ENCODE measurements at regions of chr17 and their contacts with region 1.

Region 1: GRCh38 chr17:81238817-81239600 is at the starts of genes NDUFAF8 and TEPSIN:
- DNase-seq: peak; percentile 97
- ATAC-seq: peak; percentile 99
- H3K4me3 Mint-ChIP-seq: peak within 1 kb of the TSS; percentile 93
- H3K27ac Mint-ChIP-seq: peak within 1 kb of the TSS; percentile 96
- H3K4me1 Mint-ChIP-seq: peaks cover 25% of the 10 kb centered on the region
- H3K27me3 Mint-ChIP-seq: no peaks in the 10 kb centered on the region
- total RNA-seq, gene NDUFAF8: 31.0 to 57.9 TPM
- total RNA-seq, gene TEPSIN: 17.8 to 20.3 TPM

Region 2: DNA sequence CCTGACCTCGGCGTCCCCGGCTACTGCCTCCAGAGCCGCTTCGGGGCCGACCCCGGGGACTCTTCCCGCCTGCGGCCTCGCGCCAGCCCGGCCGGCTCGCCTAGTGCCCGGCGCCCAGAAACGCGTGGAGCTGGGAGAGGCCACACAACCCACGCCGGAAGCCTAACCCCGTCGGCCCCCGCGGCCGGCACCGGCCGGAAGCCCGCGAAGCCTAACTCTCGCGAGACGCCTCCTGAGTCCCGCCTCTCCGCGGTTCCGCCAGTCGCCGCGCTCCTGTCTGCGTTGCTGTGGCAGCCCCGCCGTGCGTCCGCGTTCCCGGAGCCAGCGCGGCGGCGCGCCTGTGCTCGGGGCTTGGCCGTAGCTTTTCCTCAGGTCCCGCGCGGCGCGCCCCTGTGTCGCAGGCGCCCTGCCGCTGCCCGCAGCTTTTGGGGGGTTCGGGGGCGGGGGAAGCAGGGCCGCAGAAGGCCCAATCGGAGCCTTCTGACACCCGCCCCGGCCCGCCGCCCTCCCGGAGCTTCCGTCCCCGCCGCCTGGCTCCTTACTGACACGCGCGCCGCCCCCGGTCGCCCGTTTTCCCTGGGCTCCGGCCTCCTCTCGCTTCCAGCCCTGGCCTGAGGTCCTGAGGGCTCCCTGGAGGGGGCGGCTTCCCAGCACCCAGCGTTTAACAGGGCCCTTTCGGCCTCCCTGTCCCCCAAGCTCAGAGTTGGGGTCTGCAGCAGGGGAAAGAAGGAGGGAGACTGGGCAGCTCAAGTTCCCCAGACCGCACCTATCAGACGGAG is 784.3 kb before region 1 on chr17:
- CTCF ChIA-PET with region 1: no interaction called
- POLR2A ChIA-PET with region 1: no interaction called
- intact Hi-C with region 1: loop called in 1 of 2 experiments (anchors 1 kb)
- DNase-seq: peak; percentile 98
- ATAC-seq: peak; percentile 93
- H3K4me3 Mint-ChIP-seq: peak overlapping the region; percentile 99
- H3K27ac Mint-ChIP-seq: peak overlapping the region; percentile 94
- H3K4me1 Mint-ChIP-seq: peaks cover 23% of the 10 kb centered on the region
- H3K27me3 Mint-ChIP-seq: peaks cover 13% of the 10 kb centered on the region

Region 3: DNA sequence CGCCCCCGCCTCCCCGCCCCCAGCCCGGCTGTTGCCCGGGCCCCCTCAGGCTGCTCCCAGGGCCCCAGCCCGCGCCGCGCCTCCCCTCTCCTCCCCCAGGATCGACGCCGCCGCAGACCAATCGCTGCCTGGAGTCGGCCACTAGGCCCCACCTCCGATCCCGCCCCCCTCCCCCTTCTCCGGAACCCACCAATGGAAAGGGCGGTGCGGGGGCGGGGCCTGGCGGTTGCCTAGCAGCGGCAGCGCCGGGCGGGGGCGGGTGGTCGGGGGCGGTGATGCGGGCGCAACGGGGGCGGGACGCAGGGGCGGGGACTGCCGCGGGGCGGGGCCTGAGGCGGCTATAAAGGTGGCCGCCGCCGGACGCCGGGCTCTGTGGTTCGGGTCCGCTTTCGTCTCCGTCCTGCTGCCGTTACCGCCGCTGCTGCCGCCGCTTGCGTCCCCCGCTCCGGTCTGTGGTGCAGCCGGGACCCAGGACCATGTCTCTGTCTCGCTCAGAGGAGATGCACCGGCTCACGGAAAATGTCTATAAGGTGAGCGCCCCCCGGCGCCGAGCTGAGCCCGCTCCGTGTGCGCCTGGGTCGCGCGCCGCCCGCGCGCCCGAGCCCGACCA is 204.1 kb before region 1 on chr17 and contains the start of gene BAIAP2:
- CTCF ChIA-PET with region 1: no interaction called
- POLR2A ChIA-PET with region 1: interaction called, 3 read pairs
- intact Hi-C with region 1: loop called in 1 of 2 experiments (anchors 1 kb)
- DNase-seq: peak; percentile 99
- ATAC-seq: peak; percentile 91
- H3K4me3 Mint-ChIP-seq: peak within 1 kb of the TSS; percentile 72
- H3K27ac Mint-ChIP-seq: peak within 1 kb of the TSS; percentile 47
- H3K4me1 Mint-ChIP-seq: peaks cover 20% of the 10 kb centered on the region
- H3K27me3 Mint-ChIP-seq: peaks cover 19% of the 10 kb centered on the region
- total RNA-seq, gene BAIAP2: 4.6 to 5.0 TPM

Region 4: DNA sequence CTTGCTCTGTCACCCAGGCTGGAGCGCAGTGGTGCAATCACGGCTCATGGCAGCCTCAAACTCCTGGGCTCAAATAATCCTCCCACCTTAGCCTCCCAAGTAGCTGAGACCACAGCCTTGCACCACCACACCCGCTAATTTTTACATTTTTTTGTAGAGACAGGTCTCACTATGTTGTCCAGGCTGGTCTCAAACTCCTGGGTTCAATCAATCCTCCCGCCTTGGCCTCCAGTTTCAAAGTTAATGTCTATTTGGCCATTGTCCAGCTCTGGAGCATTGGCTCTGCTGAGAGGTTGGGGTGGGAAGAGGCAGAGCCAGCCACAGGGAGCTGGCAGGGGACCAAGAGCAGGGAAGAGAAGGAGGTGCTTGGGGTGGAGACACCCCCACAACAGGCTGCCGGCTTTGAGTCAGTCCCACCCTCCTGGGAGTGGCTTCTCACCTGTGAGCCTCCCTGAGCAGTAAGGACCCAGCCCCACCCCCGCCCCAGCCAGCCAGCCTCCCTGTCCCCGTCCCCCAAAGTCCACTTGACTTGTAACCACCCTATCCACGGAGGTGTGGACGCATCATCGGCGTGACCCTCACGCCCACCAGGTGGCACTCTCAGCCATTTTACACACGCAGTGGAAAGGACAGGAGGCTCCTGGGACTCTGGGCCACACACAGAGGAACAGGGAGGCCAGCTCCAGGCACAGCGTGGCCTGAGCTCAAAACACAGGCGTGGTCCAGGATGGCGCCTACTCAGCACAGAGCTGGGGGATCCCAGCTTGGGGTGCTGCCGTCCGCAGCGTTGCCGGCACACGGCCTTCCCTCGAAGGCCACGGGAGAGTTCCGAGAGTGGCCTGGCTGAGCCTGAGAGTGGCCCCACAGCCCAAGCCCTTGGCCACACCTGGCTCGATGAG is 96.5 kb before region 1 on chr17:
- CTCF ChIA-PET with region 1: interaction called, 6 read pairs
- POLR2A ChIA-PET with region 1: no interaction called
- intact Hi-C with region 1: loop called (anchors 1 to 2 kb)
- DNase-seq: peak; percentile 80
- ATAC-seq: peak; percentile 93
- H3K4me3 Mint-ChIP-seq: no peak overlapping the region
- H3K27ac Mint-ChIP-seq: no peak overlapping the region
- H3K4me1 Mint-ChIP-seq: no peaks in the 10 kb centered on the region
- H3K27me3 Mint-ChIP-seq: no peaks in the 10 kb centered on the region

Region 5: GRCh38 chr17:81249223-81250040 is 10.4 kb after region 1 on chr17:
- CTCF ChIA-PET with region 1: no interaction called
- POLR2A ChIA-PET with region 1: no interaction called
- intact Hi-C with region 1: no loop called
- DNase-seq: no peak
- ATAC-seq: no peak
- H3K4me3 Mint-ChIP-seq: no peak overlapping the region
- H3K27ac Mint-ChIP-seq: no peak overlapping the region
- H3K4me1 Mint-ChIP-seq: peaks cover 8% of the 10 kb centered on the region
- H3K27me3 Mint-ChIP-seq: no peaks in the 10 kb centered on the region

Region 6: GRCh38 chr17:81512560-81513371 is 273.8 kb after region 1 on chr17 and contains the start of gene ACTG1:
- CTCF ChIA-PET with region 1: no interaction called
- POLR2A ChIA-PET with region 1: interaction called, 3 read pairs
- intact Hi-C with region 1: loop called in 1 of 2 experiments (anchors 1 kb)
- DNase-seq: peak; percentile 95
- ATAC-seq: peak; percentile 61
- H3K4me3 Mint-ChIP-seq: peak within 1 kb of the TSS; percentile 97
- H3K27ac Mint-ChIP-seq: peak within 1 kb of the TSS; percentile 89
- H3K4me1 Mint-ChIP-seq: peaks cover 21% of the 10 kb centered on the region
- H3K27me3 Mint-ChIP-seq: no peaks in the 10 kb centered on the region
- total RNA-seq, gene ACTG1: 4,119 to 5,987 TPM

Region 7: DNA sequence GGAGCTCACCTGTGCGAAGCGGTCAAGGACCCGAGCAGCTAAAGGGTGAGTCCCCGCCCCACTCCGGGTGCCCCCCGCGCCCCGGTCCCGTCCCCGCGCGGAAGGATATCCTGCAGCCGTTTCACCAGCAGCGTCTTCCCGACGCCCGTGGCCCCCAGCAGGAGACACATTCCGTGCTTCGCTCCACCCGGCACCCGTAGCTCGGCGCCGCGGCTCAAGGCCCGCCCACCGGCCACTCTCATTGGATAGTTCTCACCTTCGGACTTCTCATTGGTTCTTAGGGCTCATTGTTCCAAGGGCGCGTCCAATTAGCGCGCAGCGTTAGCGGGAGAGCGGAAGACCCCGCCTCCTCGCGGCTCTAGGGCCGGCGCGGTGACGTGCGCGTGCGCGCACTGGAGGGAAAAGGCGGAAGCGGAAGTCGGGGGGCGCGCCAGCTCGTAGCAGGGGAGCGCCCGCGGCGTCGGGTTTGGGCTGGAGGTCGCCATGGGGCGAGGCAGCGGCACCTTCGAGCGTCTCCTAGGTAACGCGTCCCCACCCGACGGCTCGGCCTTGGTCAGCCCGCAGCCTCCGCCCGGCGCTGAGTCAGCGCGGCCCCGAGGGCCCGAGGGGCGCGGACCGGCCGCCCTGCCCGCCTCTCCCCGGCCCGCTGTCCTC is 444.7 kb after region 1 on chr17 and contains the starts of genes ARL16 and HGS:
- CTCF ChIA-PET with region 1: no interaction called
- POLR2A ChIA-PET with region 1: no interaction called
- intact Hi-C with region 1: loop called in 1 of 2 experiments (anchors 1 kb)
- DNase-seq: peak; percentile 98
- ATAC-seq: peak; percentile 98
- H3K4me3 Mint-ChIP-seq: peak within 1 kb of the TSS; percentile 87
- H3K27ac Mint-ChIP-seq: peak within 1 kb of the TSS; percentile 83
- H3K4me1 Mint-ChIP-seq: peaks cover 30% of the 10 kb centered on the region
- H3K27me3 Mint-ChIP-seq: no peaks in the 10 kb centered on the region
- total RNA-seq, gene ARL16: 39.0 to 39.1 TPM
- total RNA-seq, gene HGS: 100 to 102 TPM

Measured in activated CD4-positive, alpha-beta T cell treated with anti-CD3 and anti-CD28 coated beads for 36 hours (primary cell).